ENCODE measurements at regions of chr1 and their contacts with region 1.

Region 1: GRCh38 chr1:214261206-214262123 is 19.5 kb upstream of the SMYD2 start:
- DNase-seq: peak; percentile 61 to 89 (median 80)
- ATAC-seq: peak; percentile 96
- H3K4me3 ChIP-seq: no peak overlapping the region
- H3K4me3 Mint-ChIP-seq: no peak overlapping the region
- H3K27ac ChIP-seq: no peak overlapping the region
- H3K27ac Mint-ChIP-seq: no peak overlapping the region
- H3K4me1 ChIP-seq: peaks cover 3% of the 10 kb centered on the region
- H3K4me1 Mint-ChIP-seq: peaks cover 2% of the 10 kb centered on the region
- H3K27me3 ChIP-seq: peaks cover 0 to 2% of the 10 kb centered on the region in 2 experiments
- H3K27me3 Mint-ChIP-seq: peaks cover 63% of the 10 kb centered on the region
- CTCF ChIP-seq: peak; percentile 94

Region 2: DNA sequence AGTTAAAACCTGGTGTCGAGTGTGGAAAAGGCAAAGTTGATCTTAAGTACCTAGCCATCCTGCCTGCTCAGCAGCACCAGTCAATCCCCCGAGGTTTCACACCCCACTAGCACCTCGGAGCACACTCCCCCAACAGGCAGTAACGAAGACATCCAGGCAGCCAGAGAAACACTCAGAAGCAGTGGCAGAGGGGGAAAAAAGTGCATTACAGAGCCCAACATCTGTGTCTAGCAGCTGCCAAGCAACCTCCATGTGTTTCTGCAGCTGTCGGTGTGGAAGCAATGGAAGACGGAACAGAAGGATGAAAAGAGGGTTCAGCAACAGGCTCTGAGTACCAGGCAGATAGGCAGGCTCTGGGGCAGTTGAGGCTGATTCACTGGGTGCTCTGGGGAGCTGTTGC is 347.1 kb before region 1 on chr1:
- CTCF ChIA-PET with region 1: no interaction called
- POLR2A ChIA-PET with region 1: no interaction called
- intact Hi-C with region 1: no loop called
- DNase-seq: no peak
- ATAC-seq: no peak
- H3K4me3 ChIP-seq: no peak overlapping the region
- H3K4me3 Mint-ChIP-seq: no peak overlapping the region
- H3K27ac ChIP-seq: no peak overlapping the region
- H3K27ac Mint-ChIP-seq: no peak overlapping the region
- H3K4me1 ChIP-seq: no peaks in the 10 kb centered on the region
- H3K4me1 Mint-ChIP-seq: no peaks in the 10 kb centered on the region
- H3K27me3 ChIP-seq: no peaks in the 10 kb centered on the region
- H3K27me3 Mint-ChIP-seq: no peaks in the 10 kb centered on the region
- CTCF ChIP-seq: no peak

Region 3: DNA sequence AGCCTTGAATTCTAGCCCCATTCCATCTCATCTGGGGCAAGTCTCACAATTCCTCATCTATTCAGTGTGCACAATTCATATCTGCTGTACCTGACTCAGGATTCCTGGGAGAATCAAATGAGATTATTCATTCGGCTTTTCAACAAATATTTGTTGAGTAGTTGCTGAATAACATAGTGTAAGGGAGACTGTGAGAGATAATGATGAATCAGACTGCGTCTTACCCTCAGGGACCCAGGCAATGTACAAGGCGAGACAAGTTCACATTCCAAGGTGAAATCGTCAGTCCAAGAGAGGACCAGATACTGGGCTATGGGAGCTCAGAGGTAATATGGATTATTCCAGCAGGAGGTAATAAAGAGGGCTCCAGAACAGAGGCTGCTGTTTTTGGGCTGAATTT is 48.3 kb before region 1 on chr1:
- CTCF ChIA-PET with region 1: interaction called, 10 read pairs
- POLR2A ChIA-PET with region 1: no interaction called
- intact Hi-C with region 1: no loop called
- DNase-seq: no peak
- ATAC-seq: no peak
- H3K4me3 ChIP-seq: no peak overlapping the region
- H3K4me3 Mint-ChIP-seq: no peak overlapping the region
- H3K27ac ChIP-seq: no peak overlapping the region
- H3K27ac Mint-ChIP-seq: no peak overlapping the region
- H3K4me1 ChIP-seq: no peaks in the 10 kb centered on the region
- H3K4me1 Mint-ChIP-seq: peaks cover 3% of the 10 kb centered on the region
- H3K27me3 ChIP-seq: no peaks in the 10 kb centered on the region
- H3K27me3 Mint-ChIP-seq: peaks cover 18% of the 10 kb centered on the region
- CTCF ChIP-seq: no peak

Region 4: GRCh38 chr1:214281021-214281719 is 19.7 kb after region 1 on chr1 and contains the start of gene SMYD2:
- CTCF ChIA-PET with region 1: interaction called, 30 read pairs
- POLR2A ChIA-PET with region 1: no interaction called
- intact Hi-C with region 1: loop called in 1 of 2 experiments (anchors 2 kb)
- DNase-seq: peak; percentile 32 to 85 (median 68)
- ATAC-seq: peak; percentile 77
- H3K4me3 ChIP-seq: peak within 1 kb of the TSS; percentile 60 to 80
- H3K4me3 Mint-ChIP-seq: peak within 1 kb of the TSS; percentile 86
- H3K27ac ChIP-seq: peak within 1 kb of the TSS; percentile 72 to 83
- H3K27ac Mint-ChIP-seq: peak within 1 kb of the TSS; percentile 91
- H3K4me1 ChIP-seq: peaks cover 26% of the 10 kb centered on the region
- H3K4me1 Mint-ChIP-seq: peaks cover 57% of the 10 kb centered on the region
- H3K27me3 ChIP-seq: no peaks in the 10 kb centered on the region
- H3K27me3 Mint-ChIP-seq: no peaks in the 10 kb centered on the region
- CTCF ChIP-seq: no peak
- total RNA-seq, gene SMYD2: 12.9 to 14.1 TPM

Region 5: DNA sequence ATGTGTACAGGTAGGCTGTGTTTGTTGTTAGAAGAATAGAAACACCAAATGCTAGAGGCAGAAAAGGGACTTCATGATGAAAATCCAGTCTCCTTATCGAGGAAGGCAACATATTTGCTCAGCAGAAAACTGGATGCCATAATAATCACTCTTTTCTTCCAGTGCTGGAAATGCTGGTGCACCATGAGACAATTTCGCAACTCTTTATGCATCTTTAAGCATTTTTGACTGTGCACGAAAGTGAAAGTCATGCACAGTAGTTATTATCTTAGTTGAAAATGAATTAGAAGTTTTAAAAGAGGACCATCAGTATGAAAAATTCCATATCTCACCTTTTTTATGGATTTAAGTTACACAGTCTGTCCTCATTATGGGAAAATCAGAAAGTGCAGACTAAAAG is 48.5 kb after region 1 on chr1:
- CTCF ChIA-PET with region 1: interaction called, 25 read pairs
- POLR2A ChIA-PET with region 1: no interaction called
- intact Hi-C with region 1: no loop called
- DNase-seq: no peak
- ATAC-seq: no peak
- H3K4me3 ChIP-seq: peak overlapping the region in 1 of 2 experiments; percentile 6
- H3K4me3 Mint-ChIP-seq: peak overlapping the region; percentile 20
- H3K27ac ChIP-seq: no peak overlapping the region
- H3K27ac Mint-ChIP-seq: no peak overlapping the region
- H3K4me1 ChIP-seq: peaks cover 8% of the 10 kb centered on the region
- H3K4me1 Mint-ChIP-seq: peaks cover 38% of the 10 kb centered on the region
- H3K27me3 ChIP-seq: no peaks in the 10 kb centered on the region
- H3K27me3 Mint-ChIP-seq: no peaks in the 10 kb centered on the region
- CTCF ChIP-seq: no peak

Region 6: GRCh38 chr1:214584805-214585766 is 323.6 kb after region 1 on chr1:
- CTCF ChIA-PET with region 1: interaction called, 4 read pairs
- POLR2A ChIA-PET with region 1: no interaction called
- intact Hi-C with region 1: loop called in 1 of 2 experiments (anchors 10 kb)
- DNase-seq: no peak
- ATAC-seq: no peak
- H3K4me3 ChIP-seq: no peak overlapping the region
- H3K4me3 Mint-ChIP-seq: no peak overlapping the region
- H3K27ac ChIP-seq: no peak overlapping the region
- H3K27ac Mint-ChIP-seq: no peak overlapping the region
- H3K4me1 ChIP-seq: no peaks in the 10 kb centered on the region
- H3K4me1 Mint-ChIP-seq: no peaks in the 10 kb centered on the region
- H3K27me3 ChIP-seq: peaks cover 0 to 3% of the 10 kb centered on the region in 2 experiments
- H3K27me3 Mint-ChIP-seq: peaks cover 10% of the 10 kb centered on the region
- CTCF ChIP-seq: peak; percentile 37

Region 7: GRCh38 chr1:215526553-215527151 is 1265.2 kb after region 1 on chr1:
- CTCF ChIA-PET with region 1: interaction called, 6 read pairs
- POLR2A ChIA-PET with region 1: no interaction called
- intact Hi-C with region 1: loop called (anchors 2 to 5 kb)
- DNase-seq: peak in 2 of 9 experiments; percentile 37 to 55
- ATAC-seq: no peak
- H3K4me3 ChIP-seq: no peak overlapping the region
- H3K4me3 Mint-ChIP-seq: no peak overlapping the region
- H3K27ac ChIP-seq: no peak overlapping the region
- H3K27ac Mint-ChIP-seq: no peak overlapping the region
- H3K4me1 ChIP-seq: no peaks in the 10 kb centered on the region
- H3K4me1 Mint-ChIP-seq: no peaks in the 10 kb centered on the region
- H3K27me3 ChIP-seq: no peaks in the 10 kb centered on the region
- H3K27me3 Mint-ChIP-seq: peaks cover 9% of the 10 kb centered on the region
- CTCF ChIP-seq: peak; percentile 87

Measured in CD8-positive, alpha-beta T cell (primary cell).